Stomach (tissue), 19 donors: ENCODE measurements at regions of chr17 and their contacts with region 1.

Region 1: GRCh38 chr17:19766422-19767270 is 18.5 kb upstream of the ALDH3A1 start:
- DNase-seq: peak; percentile 81 to 88
- H3K4me3 ChIP-seq: no peak overlapping the region
- H3K27ac ChIP-seq: no peak overlapping the region
- H3K4me1 ChIP-seq: peaks cover 0 to 15% (median 10%) of the 10 kb centered on the region in 4 donors
- H3K27me3 ChIP-seq: no peaks in the 10 kb centered on the region
- CTCF ChIP-seq: peak in 5 of 7 experiments; percentile 82 to 95 (median 89)
- EP300 ChIP-seq: no peak
- POLR2A ChIP-seq: no peak

Region 2: GRCh38 chr17:19284005-19284959 is 482.4 kb before region 1 on chr17:
- intact Hi-C with region 1: no loop called
- DNase-seq: no peak
- H3K4me3 ChIP-seq: no peak overlapping the region
- H3K27ac ChIP-seq: peak overlapping the region in 3 of 5 donors; percentile 6 to 33 (median 31)
- H3K4me1 ChIP-seq: peaks cover 25 to 79% (median 40%) of the 10 kb centered on the region in 4 donors
- H3K27me3 ChIP-seq: no peaks in the 10 kb centered on the region
- CTCF ChIP-seq: no peak
- EP300 ChIP-seq: no peak
- POLR2A ChIP-seq: no peak

Region 3: GRCh38 chr17:19362277-19363113 is 404.2 kb before region 1 on chr17 and contains the start of gene B9D1:
- intact Hi-C with region 1: loop called (anchors 10 kb)
- DNase-seq: peak; percentile 96 to 97
- H3K4me3 ChIP-seq: peak within 1 kb of the TSS; percentile 76 to 87 (median 76)
- H3K27ac ChIP-seq: peak within 1 kb of the TSS; percentile 82 to 92 (median 87)
- H3K4me1 ChIP-seq: peaks cover 0 to 17% (median 14%) of the 10 kb centered on the region in 4 donors
- H3K27me3 ChIP-seq: no peaks in the 10 kb centered on the region
- CTCF ChIP-seq: peak in 6 of 7 experiments; percentile 77 to 99 (median 96)
- EP300 ChIP-seq: no peak
- POLR2A ChIP-seq: no peak
- total RNA-seq, gene B9D1: 10.9 to 22.8 (median 21.3) TPM in 3 of 5 donors, not detected in the others

Region 4: GRCh38 chr17:19470532-19471261 is 295.9 kb before region 1 on chr17:
- intact Hi-C with region 1: no loop called
- DNase-seq: peak; percentile 35 to 81
- H3K4me3 ChIP-seq: peak overlapping the region; percentile 7 to 26 (median 20)
- H3K27ac ChIP-seq: peak overlapping the region; percentile 52 to 83 (median 73)
- H3K4me1 ChIP-seq: peaks cover 0 to 9% (median 2%) of the 10 kb centered on the region in 4 donors
- H3K27me3 ChIP-seq: no peaks in the 10 kb centered on the region
- CTCF ChIP-seq: no peak
- EP300 ChIP-seq: peak; percentile 63
- POLR2A ChIP-seq: no peak

Region 5: GRCh38 chr17:19513897-19514488 is 252.7 kb before region 1 on chr17:
- intact Hi-C with region 1: loop called (anchors 5 kb)
- DNase-seq: peak; percentile 74 to 88
- H3K4me3 ChIP-seq: no peak overlapping the region
- H3K27ac ChIP-seq: peak overlapping the region in 2 of 5 donors; percentile 46 to 53
- H3K4me1 ChIP-seq: peaks cover 0 to 6% (median 0%) of the 10 kb centered on the region in 4 donors
- H3K27me3 ChIP-seq: no peaks in the 10 kb centered on the region
- CTCF ChIP-seq: peak in 5 of 7 experiments; percentile 72 to 90 (median 83)
- EP300 ChIP-seq: no peak
- POLR2A ChIP-seq: no peak

Region 6: GRCh38 chr17:19867064-19867313 is 100.3 kb after region 1 on chr17:
- intact Hi-C with region 1: no loop called
- DNase-seq: peak; percentile 70 to 89
- H3K4me3 ChIP-seq: peak overlapping the region; percentile 75 to 89 (median 87)
- H3K27ac ChIP-seq: peak overlapping the region; percentile 65 to 91 (median 82)
- H3K4me1 ChIP-seq: peaks cover 13 to 27% (median 19%) of the 10 kb centered on the region in 4 donors
- H3K27me3 ChIP-seq: no peaks in the 10 kb centered on the region
- CTCF ChIP-seq: peak in 2 of 7 experiments; percentile 7 to 24
- EP300 ChIP-seq: no peak
- POLR2A ChIP-seq: no peak